HEK293T (cell line): ENCODE measurements at regions of chr17 and their contacts with region 1.

Region 1: DNA sequence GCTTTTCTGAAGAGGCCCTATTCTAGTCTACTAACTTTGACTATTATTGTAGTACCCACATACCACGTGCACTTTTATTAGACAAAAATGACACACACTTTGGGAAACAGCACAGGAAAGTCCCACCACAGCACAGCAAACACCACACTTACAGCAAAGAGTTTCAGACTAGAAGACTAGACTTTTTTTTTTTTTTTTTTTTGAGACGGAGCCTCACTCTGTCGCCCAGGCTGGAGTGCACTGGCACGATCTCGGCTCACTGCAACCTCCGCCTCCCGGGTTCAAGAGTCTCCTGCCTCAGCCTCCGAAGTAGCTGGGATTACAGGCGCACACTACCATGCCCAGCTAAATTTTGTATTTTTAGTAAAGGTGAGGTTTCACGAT is 20.1 kb downstream of the YWHAE start:
- DNase-seq: no peak

Region 2: GRCh38 chr17:1298606-1299005 is 81.3 kb before region 1 on chr17:
- CTCF ChIA-PET with region 1: no interaction called
- POLR2A ChIA-PET with region 1: no interaction called
- DNase-seq: no peak

Region 3: DNA sequence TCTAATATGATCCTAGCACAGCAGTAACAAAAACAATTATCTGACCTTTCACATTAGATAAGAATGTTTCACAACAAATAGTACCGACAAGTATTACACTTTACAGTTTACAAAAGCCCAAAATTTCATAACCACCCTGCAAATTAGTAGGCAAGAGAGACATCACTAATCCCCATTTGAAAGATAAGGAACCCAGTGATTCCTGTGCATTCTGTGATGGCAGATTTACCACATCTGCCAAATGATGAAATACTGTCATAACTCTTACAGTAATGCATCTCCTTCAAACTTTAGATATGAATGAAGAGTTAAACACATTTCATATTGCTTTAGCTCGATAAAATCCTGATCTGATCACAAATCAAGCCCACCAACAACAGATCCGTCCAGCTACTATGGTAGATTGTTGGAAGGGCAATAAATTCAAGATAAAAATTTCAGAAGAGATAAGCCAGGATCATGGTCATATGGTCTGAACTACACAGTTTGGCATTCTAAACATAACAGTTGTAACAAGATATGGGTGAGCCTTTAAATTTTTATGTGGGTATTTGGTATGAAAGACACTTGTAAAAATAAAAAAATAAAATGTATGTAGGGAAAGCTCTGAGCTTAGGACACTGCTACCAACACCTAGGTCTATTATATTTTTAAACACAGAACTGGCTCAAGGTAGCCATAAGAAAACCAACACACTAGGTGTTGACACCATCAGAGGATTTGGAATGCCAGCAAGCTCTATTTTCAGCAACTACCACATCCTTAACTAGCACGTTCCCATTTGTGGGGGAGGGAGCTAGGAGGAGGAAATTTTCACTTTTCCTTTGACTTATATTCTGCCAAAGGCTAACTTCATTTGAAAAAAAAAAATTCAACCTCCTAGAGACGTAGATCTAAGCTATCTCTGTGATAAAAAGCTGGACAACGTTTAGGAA is 10.8 kb after region 1 on chr17:
- CTCF ChIA-PET with region 1: interaction called, 10 read pairs
- POLR2A ChIA-PET with region 1: interaction called, 8 read pairs
- DNase-seq: no peak